MCF 10A (cell line): ENCODE measurements at regions of chr12 and their contacts with region 1.

Region 1: DNA sequence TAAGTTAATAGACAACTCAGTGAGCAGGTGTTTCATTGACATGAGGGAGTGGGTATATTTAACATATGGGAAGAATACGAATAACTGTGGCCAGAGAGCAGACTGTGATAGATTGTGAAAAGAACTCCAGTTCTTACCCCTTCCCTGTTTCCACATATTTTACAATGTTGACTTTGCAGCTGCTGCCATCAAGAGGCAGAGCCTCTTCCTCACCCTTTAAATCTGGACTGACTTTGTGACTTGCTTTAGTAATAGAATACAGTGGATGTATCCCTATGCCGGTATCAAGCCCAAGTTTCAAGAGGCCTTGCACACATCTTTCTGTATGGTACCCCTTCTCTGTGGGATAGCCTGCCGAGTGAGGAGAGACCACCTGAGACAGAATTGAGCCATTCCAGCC is 356.7 kb downstream of the ETNK1 start:
- DNase-seq: peak; percentile 40
- H3K4me3 Mint-ChIP-seq: no peak overlapping the region
- H3K27ac Mint-ChIP-seq: no peak overlapping the region
- H3K4me1 Mint-ChIP-seq: peaks cover 13% of the 10 kb centered on the region
- H3K27me3 Mint-ChIP-seq: no peaks in the 10 kb centered on the region
- CTCF ChIP-seq: peak; percentile 38

Region 2: DNA sequence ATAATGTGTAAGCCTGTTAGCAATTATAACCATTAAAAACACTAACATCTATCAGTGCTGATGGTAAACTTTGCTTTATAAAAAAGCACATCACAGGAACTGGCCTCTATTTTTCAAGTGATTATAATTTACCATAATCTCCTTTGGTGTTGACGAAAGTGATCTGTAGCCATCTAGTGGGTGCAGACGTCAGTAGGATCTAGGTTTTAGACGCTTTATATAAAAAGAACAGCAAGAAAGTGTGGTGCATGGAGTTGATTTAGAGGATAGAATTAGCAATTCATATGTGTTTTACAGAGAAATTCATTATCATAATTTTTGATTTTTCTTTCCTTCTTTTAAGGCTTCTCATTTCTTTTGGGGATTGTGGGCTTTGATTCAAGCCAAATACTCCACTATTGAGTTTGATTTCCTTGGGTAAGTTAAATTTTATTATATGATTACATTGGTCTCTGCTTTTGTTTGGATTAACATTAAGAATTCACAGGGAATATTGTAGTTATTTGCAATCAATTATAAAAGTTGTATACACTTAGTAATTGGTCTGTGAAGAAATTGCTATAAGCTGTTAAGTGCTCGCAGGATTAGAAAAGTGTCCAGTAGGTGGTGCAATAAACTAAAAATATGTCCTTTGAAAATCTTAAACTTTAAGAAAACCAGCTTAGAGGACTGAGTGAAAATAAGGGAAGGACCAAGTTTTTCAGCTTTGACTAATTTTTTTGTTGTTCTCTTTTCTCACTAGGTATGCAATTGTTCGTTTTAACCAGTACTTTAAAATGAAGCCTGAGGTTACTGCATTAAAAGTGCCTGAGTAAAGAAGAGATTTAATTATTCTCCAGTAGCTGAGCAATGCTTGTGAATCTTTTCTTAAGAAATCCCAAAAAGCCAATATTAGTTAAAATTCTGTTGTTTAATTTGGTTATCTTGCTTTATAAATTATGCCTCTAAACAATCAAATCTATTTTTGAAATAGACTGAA is 297.3 kb before region 1 on chr12:
- CTCF ChIA-PET with region 1: interaction called, 3 read pairs
- POLR2A ChIA-PET with region 1: no interaction called
- intact Hi-C with region 1: loop called (anchors 5 kb)
- DNase-seq: peak; percentile 42
- H3K4me3 Mint-ChIP-seq: no peak overlapping the region
- H3K27ac Mint-ChIP-seq: no peak overlapping the region
- H3K4me1 Mint-ChIP-seq: no peaks in the 10 kb centered on the region
- H3K27me3 Mint-ChIP-seq: no peaks in the 10 kb centered on the region
- CTCF ChIP-seq: peak; percentile 53

Region 3: GRCh38 chr12:22709292-22709691 is 272.4 kb before region 1 on chr12:
- CTCF ChIA-PET with region 1: interaction called, 4 read pairs
- POLR2A ChIA-PET with region 1: no interaction called
- intact Hi-C with region 1: loop called (anchors 2 kb)
- DNase-seq: peak; percentile 38
- H3K4me3 Mint-ChIP-seq: no peak overlapping the region
- H3K27ac Mint-ChIP-seq: no peak overlapping the region
- H3K4me1 Mint-ChIP-seq: no peaks in the 10 kb centered on the region
- H3K27me3 Mint-ChIP-seq: peaks cover 22% of the 10 kb centered on the region
- CTCF ChIP-seq: peak; percentile 38

Region 4: DNA sequence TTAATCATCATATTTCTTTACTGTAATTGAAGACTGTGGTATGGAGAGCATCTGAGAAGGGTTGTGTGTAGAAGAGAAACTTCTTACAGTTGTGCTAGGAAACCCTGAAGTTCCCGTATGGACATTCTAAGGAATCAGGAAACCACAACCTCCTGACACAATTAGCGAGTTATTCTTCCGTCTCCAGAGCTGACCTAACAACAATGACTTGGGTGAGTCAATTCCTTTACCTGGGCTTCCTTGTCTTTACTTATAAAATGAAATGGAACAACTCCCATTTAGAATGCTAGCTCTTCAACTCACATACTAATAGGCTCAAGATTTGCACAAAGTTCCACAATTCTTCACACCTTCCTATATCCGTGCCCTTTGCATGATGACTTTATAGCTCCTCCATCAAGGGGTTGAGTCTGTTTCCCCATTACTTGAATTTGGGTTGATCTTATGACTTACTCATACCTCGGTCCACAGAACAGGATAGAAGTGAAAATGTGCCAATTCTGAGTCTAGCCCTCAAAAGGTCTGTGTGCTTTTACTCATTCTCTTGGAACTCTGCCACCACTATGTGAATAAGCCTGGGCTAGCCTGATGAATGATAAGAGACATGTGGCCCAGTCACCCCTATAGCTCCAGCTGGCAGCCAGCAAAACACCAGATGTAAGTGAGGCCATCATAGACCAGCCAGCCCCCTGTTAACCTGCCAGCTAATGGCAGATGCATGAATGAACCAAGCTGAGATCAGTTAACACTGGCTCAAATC is 102.7 kb after region 1 on chr12:
- CTCF ChIA-PET with region 1: no interaction called
- POLR2A ChIA-PET with region 1: no interaction called
- intact Hi-C with region 1: loop called (anchors 1 kb)
- DNase-seq: peak; percentile 97
- H3K4me3 Mint-ChIP-seq: no peak overlapping the region
- H3K27ac Mint-ChIP-seq: peak overlapping the region; percentile 28
- H3K4me1 Mint-ChIP-seq: peaks cover 24% of the 10 kb centered on the region
- H3K27me3 Mint-ChIP-seq: no peaks in the 10 kb centered on the region
- CTCF ChIP-seq: no peak